HEK293 (cell line): ENCODE measurements at regions of chr9 and their contacts with region 1.

Region 1: DNA sequence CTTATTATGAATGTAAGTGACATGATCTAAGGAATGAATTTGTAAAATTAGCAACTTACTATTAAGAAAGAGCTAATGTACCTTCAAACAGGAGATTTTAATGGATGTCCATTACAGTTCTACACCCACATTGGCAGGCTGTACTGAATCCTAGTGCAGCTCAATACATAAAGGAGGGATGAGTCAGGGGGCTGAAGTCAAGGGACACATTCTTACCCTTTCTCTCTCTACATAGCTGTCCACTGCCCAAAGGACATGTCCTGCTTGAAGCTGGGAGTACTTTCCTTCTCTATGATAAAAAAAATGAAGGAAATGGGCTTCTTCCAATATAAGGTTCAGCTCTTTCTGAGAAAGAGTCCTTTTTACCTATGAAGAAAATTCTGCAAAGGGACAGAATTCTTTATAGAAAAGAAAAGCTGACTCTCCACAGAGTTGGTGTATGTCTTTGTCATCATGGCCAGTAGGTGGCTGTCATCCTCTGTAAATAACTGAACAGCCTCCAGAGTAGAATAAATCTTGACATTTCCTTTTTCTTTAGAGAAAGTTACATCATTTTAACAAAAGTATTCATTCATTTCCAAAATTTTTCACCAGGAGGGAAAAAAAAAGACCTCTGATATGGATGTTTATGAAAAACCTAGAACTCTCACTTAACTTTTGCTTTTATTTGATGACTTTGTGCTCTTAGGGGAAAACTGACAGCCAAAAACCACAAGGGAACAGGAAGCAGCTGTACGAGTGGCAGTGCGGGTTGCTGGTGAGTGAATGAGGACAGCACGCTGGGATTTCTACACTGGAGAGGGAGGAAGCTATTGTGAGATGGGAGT is 13.1 kb upstream of the IFNA14 start:
- H3K4me3 ChIP-seq: no peak overlapping the region
- H3K27ac ChIP-seq: no peak overlapping the region
- H3K4me1 ChIP-seq: no peaks in the 10 kb centered on the region
- CTCF ChIP-seq: no peak

Region 2: GRCh38 chr9:21234153-21234687 is 18.7 kb before region 1 on chr9:
- CTCF ChIA-PET with region 1: interaction called, 24 read pairs
- POLR2A ChIA-PET with region 1: no interaction called
- H3K4me3 ChIP-seq: no peak overlapping the region
- H3K27ac ChIP-seq: no peak overlapping the region
- H3K4me1 ChIP-seq: no peaks in the 10 kb centered on the region
- CTCF ChIP-seq: no peak

Region 3: DNA sequence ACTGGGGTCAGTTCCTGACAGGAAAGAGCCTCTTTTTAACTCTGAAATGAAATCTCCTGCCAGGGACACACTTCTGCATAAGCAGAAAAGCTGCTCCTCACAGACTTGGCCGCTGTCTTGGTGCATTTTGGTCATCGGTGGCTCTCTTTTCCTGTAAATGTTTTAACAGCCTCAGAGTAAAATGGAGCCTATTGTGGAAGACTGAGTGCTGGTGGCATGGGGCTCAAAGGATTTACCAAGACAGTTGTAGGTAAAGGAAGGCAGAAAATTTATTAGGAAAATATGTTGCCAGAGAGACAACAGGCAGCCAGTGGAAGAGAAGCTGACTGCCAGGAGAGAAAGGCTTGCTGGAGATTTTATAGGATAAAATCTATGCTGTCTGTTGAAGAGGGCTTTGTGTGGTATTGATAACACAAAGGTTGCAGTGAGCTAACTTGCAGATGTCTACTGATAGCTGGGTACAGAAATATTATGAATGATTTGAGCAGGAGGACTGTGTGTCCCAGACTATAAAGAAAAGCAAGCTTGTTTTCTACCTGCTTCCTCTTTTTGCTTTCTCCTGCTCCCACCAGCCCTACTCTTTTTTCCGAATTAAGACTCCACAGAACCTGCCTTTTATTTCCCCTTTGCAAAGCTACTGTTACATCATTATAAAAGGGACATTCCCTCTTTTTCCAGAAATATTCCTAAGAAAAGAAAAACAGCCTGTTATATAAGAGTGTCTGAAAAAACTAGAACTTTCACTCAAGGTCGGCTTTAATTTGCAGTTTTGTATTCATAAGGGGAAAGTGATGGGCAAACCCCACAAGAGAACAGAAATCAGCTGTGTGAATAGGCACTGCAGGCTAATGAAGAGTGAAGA is 14.8 kb after region 1 on chr9:
- CTCF ChIA-PET with region 1: interaction called, 12 read pairs
- POLR2A ChIA-PET with region 1: no interaction called
- H3K4me3 ChIP-seq: no peak overlapping the region
- H3K27ac ChIP-seq: no peak overlapping the region
- H3K4me1 ChIP-seq: no peaks in the 10 kb centered on the region
- CTCF ChIP-seq: no peak

Region 4: DNA sequence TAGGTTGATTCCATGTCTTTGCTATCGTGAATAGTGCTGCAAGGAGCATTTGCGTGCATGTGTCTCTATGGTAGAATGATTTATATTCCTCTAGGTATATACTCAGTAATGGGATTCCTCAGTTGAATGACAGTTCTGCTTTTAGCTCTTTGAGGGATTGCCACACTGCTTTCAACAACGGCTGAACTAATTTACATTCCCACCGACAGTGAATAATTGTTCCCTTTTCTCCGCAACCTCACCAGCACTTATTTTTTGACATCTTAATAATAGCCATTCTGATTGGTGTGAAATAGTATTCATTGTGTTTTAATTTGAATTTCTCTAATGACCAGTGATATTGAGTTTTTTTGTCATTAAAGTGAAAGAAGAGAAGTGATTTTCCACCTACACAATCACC is 33.7 kb after region 1 on chr9:
- CTCF ChIA-PET with region 1: interaction called, 11 read pairs
- POLR2A ChIA-PET with region 1: no interaction called
- H3K4me3 ChIP-seq: no peak overlapping the region
- H3K27ac ChIP-seq: no peak overlapping the region
- H3K4me1 ChIP-seq: no peaks in the 10 kb centered on the region
- CTCF ChIP-seq: no peak

Region 5: DNA sequence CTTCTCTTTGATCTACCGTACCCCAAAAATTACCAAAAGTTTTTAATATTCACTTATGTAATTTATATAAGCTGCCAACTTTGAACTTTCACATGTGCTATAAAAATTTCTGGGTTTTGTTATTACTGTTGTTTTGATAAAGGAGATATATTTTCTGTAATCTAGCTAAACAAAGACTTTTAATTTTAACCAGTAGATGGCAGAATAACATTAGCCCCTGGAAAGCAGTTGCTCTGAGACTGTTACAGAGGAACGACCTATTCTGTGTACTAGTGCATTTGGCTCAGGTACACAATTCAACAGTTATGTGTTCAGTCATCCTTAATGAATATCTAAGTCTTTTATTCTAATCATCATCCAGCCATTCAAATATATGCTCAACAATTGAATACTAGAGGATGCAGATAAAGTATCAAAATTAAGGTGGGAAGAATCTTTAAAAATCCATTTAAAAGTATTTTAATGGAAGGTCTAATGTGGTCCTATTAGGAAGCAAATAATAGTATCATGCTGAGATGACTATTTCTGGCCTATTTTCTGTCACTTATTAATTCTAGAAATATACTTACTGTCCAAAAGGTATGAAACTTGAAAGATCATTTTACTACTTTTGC is 73.7 kb after region 1 on chr9:
- CTCF ChIA-PET with region 1: interaction called, 14 read pairs
- POLR2A ChIA-PET with region 1: no interaction called
- H3K4me3 ChIP-seq: no peak overlapping the region
- H3K27ac ChIP-seq: no peak overlapping the region
- H3K4me1 ChIP-seq: peaks cover 1% of the 10 kb centered on the region; the same call in 1 of the 2 replicates
- CTCF ChIP-seq: no peak

Region 6: DNA sequence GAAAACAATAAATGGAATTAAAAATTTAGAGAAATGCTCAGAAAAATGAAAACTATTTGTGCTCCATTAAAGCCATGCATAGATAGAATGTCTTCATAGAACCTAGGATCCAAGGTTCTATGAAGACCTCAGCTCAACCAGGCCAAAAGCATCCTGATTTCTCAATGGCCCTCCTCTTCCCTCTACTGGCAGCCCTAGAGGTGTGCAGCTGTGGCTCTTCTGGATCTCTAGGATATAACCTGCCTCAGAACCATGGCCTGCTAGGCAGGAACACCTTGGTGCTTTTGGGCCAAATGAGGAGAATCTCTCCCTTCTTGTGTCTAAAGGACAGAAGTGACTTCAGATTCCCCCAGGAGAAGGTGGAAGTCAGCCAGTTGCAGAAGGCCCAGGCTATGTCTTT is 202.4 kb after region 1 on chr9:
- CTCF ChIA-PET with region 1: interaction called, 28 read pairs
- POLR2A ChIA-PET with region 1: no interaction called
- H3K4me3 ChIP-seq: no peak overlapping the region
- H3K27ac ChIP-seq: no peak overlapping the region
- H3K4me1 ChIP-seq: no peaks in the 10 kb centered on the region
- CTCF ChIP-seq: peak; percentile 38; the same call in 1 of the 2 replicates